K562 (cell line): ENCODE measurements at regions of chr19 and their contacts with region 1.

Region 1: GRCh38 chr19:49097455-49098288 is 12.4 kb downstream of the SNRNP70 start:
- DNase-seq: peak; percentile 76 to 86 (median 78)
- ATAC-seq: peak; percentile 89
- H3K4me3 ChIP-seq: no peak overlapping the region
- H3K27ac ChIP-seq: peak overlapping the region; percentile 46; the same call in 1 of the 3 replicates
- H3K4me1 ChIP-seq: peaks cover 0 to 11% of the 10 kb centered on the region in 2 experiments; a peak in 3 of 5 replicates
- H3K27me3 ChIP-seq: no peaks in the 10 kb centered on the region
- CTCF ChIP-seq: peak; percentile 92 to 98 (median 93)
- EP300 ChIP-seq: no peak
- POLR2A ChIP-seq: no peak; the same call in 1 of the 2 replicates
- RAD21 ChIP-seq: peak; percentile 86 to 93

Region 2: DNA sequence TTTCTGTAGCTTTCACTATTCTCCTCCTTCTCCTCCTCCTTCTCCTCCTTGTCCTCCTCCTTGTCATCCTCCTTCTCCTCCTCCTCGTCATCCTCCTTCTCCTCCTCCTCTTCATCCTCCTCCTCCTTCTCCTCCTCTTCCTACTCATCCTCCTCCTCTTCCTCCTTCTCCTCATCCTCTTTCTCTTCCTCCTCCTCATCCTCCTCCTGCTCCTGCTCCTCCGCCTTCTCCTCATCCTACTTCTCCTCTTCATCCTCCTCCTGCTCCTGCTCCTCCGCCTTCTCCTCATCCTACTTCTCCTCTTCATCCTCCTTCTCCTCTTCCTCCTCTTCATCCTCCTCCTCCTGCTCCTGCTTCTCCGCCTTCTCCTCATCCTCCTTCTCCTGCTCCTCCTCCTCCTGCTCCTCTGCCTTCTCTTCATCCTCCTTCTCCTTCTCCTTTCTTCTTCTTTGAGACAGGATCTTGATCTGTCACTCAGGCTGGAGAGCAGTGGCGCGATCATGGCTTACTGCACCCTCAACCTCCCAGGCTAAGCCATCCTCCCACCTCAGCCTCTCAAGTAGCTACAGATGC is 96.2 kb after region 1 on chr19:
- CTCF ChIA-PET with region 1: interaction called, 5 read pairs
- POLR2A ChIA-PET with region 1: interaction called, 22 read pairs
- in situ Hi-C with region 1: loop called (anchors 5 kb)
- intact Hi-C with region 1: no loop called
- DNase-seq: no peak
- ATAC-seq: no peak
- H3K4me3 ChIP-seq: no peak overlapping the region
- H3K27ac ChIP-seq: no peak overlapping the region
- H3K4me1 ChIP-seq: peaks cover 0 to 4% of the 10 kb centered on the region in 2 experiments; a peak in 1 of 5 replicates
- H3K27me3 ChIP-seq: no peaks in the 10 kb centered on the region
- CTCF ChIP-seq: no peak
- EP300 ChIP-seq: no peak
- POLR2A ChIP-seq: no peak
- RAD21 ChIP-seq: no peak

Region 3: DNA sequence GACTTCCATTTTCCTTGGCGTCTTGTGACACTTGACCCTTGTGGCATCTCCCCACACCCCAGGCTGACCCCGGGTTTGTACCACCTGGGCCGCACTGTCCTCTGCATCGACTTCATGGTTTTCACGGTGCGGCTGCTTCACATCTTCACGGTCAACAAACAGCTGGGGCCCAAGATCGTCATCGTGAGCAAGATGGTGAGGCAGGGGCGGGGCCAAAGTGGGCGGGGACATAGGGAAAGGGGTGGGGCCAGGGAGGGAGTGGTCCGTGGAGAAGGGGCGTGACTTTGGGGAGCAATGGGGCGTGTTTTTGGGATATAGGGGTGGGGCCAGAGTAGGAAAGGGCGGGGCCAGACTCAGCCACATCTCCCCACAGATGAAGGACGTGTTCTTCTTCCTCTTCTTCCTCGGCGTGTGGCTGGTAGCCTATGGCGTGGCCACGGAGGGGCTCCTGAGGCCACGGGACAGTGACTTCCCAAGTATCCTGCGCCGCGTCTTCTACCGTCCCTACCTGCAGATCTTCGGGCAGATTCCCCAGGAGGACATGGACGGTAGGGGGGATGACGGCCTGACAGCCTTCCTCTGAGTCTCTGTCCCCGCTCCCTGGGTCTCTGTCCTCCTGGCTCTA is 102.7 kb after region 1 on chr19:
- CTCF ChIA-PET with region 1: interaction called, 5 read pairs
- POLR2A ChIA-PET with region 1: interaction called, 22 read pairs
- in situ Hi-C with region 1: no loop called
- intact Hi-C with region 1: no loop called
- DNase-seq: peak; percentile 84 to 97 (median 96)
- ATAC-seq: peak; percentile 97
- H3K4me3 ChIP-seq: peak overlapping the region; percentile 31
- H3K27ac ChIP-seq: peak overlapping the region; percentile 72; the same call in 1 of the 3 replicates
- H3K4me1 ChIP-seq: peaks cover 0 to 14% of the 10 kb centered on the region in 2 experiments; a peak in 3 of 5 replicates
- H3K27me3 ChIP-seq: no peaks in the 10 kb centered on the region
- CTCF ChIP-seq: no peak
- EP300 ChIP-seq: no peak
- POLR2A ChIP-seq: peak; percentile 45; the same call in 1 of the 2 replicates
- RAD21 ChIP-seq: no peak

Region 4: DNA sequence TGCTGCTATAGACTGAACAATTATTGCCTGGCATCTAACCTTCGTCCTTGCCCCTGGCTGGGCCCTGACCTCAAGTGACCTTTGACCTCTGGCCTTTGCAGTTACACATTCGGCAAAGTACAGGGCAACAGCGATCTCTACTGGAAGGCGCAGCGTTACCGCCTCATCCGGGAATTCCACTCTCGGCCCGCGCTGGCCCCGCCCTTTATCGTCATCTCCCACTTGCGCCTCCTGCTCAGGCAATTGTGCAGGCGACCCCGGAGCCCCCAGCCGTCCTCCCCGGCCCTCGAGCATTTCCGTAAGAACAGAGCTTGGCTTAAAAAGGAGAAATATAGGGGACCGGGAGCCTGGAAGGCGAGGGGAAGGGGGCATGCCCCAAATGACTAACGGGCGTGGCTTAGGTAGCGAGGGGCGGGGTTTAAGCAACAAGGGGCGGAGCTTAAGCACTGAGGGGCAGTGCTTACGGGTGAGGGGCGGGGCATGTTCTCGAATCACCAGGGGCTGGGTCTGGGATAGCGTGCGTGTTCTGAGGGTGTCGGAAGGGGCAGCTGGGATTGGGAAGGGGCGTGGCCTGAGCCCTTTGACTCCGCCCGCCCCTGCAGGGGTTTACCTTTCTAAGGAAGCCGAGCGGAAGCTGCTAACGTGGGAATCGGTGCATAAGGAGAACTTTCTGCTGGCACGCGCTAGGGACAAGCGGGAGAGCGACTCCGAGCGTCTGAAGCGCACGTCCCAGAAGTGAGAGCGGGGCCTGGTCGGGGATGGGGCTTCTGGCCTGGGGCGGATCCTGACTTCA is 112.6 kb after region 1 on chr19:
- CTCF ChIA-PET with region 1: interaction called, 27 read pairs
- POLR2A ChIA-PET with region 1: interaction called, 4 read pairs
- in situ Hi-C with region 1: no loop called
- intact Hi-C with region 1: loop called (anchors 2 kb)
- DNase-seq: peak; percentile 90 to 93 (median 92)
- ATAC-seq: peak; percentile 97
- H3K4me3 ChIP-seq: peak overlapping the region; percentile 44
- H3K27ac ChIP-seq: peak overlapping the region; percentile 50
- H3K4me1 ChIP-seq: peaks cover 3 to 24% of the 10 kb centered on the region in 2 experiments; a peak in 4 of 5 replicates
- H3K27me3 ChIP-seq: no peaks in the 10 kb centered on the region
- CTCF ChIP-seq: peak; percentile 75 to 79 (median 77)
- EP300 ChIP-seq: no peak
- POLR2A ChIP-seq: no peak
- RAD21 ChIP-seq: peak; percentile 22 to 63; a peak in 2 of 4 replicates

Region 5: DNA sequence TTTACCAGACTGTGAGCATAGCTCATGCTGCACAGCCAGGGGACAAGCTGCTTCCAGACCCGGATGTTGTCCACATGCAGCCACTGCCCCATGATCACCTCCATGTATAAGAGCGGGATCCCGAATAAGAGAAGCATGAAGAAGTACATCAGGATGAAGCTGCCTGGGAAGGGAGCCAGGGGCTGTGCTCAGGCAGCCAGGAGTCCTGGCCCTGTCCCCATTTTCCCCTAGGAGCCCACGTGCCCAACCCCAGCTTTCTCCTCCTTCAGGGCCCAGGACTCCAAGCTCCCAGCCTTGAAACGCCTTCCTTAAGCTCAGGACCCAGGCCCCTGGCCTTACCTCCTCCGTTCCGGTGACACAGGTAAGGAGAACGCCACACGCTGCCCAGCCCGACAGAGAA is 158.0 kb after region 1 on chr19:
- CTCF ChIA-PET with region 1: no interaction called
- POLR2A ChIA-PET with region 1: no interaction called
- in situ Hi-C with region 1: no loop called
- intact Hi-C with region 1: no loop called
- DNase-seq: no peak
- ATAC-seq: no peak
- H3K4me3 ChIP-seq: no peak overlapping the region
- H3K27ac ChIP-seq: no peak overlapping the region
- H3K4me1 ChIP-seq: no peaks in the 10 kb centered on the region
- H3K27me3 ChIP-seq: peaks cover 28 to 42% of the 10 kb centered on the region in 2 experiments
- CTCF ChIP-seq: no peak
- EP300 ChIP-seq: no peak
- POLR2A ChIP-seq: no peak
- RAD21 ChIP-seq: no peak